ENCODE measurements at regions of chr4 and their contacts with region 1.

Region 1: DNA sequence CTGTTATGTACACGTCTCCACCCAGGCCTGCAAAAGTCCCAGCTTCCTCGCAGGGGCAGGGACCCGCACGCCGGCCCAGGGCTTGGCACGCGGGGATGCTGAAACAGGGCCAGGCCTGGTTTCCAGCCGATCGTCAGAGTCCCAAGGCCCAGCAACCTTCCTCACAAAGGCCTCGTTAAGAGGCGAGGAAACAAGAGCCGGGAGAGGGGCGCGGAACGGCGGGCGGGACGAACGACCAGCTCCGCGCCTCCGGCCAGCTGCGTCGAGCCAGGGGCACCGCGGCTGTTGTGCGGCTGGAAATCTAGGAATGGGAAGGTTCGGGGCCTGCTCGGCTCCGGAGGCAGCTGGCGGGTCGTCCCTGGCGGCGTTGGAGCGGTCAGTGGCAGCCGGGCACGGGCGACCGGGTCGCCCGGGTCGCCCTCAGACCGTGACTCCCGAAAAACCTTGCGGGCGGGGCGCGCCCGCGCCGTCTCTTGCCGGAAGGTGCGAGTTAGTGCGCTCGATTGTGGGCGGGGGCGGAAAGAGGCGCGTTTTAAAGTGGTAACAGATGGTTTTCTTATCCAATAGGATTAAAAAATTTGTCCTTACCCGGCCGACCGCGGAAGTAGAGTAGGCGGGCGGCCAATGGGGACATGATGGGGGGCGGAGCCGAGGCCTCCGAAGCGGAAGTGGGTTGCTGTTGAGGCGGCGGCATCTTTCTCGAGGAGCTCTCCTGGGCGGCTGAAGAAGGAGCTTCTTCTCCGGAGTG is at the start of gene RNF4:
- DNase-seq: peak; percentile 91
- ATAC-seq: peak; percentile 85
- H3K4me3 Mint-ChIP-seq: peak within 1 kb of the TSS; percentile 97
- H3K27ac Mint-ChIP-seq: peak within 1 kb of the TSS; percentile 98
- H3K4me1 Mint-ChIP-seq: peaks cover 33% of the 10 kb centered on the region
- H3K27me3 Mint-ChIP-seq: peaks cover 3% of the 10 kb centered on the region
- total RNA-seq, gene RNF4: 103 to 109 TPM

Region 2: GRCh38 chr4:2241410-2242353 is 226.9 kb before region 1 on chr4 and contains the starts of genes HAUS3 and POLN:
- POLR2A ChIA-PET with region 1: interaction called, 15 read pairs
- DNase-seq: peak; percentile 99
- ATAC-seq: peak; percentile 93
- H3K4me3 Mint-ChIP-seq: peak within 1 kb of the TSS; percentile 92
- H3K27ac Mint-ChIP-seq: peak within 1 kb of the TSS; percentile 89
- H3K4me1 Mint-ChIP-seq: peaks cover 50% of the 10 kb centered on the region
- H3K27me3 Mint-ChIP-seq: peaks cover 4% of the 10 kb centered on the region
- total RNA-seq, gene HAUS3: 28.5 to 28.7 TPM
- total RNA-seq, gene POLN: 2.4 to 3.2 TPM

Region 3: GRCh38 chr4:2262143-2262943 is 206.3 kb before region 1 on chr4:
- POLR2A ChIA-PET with region 1: interaction called, 10 read pairs
- DNase-seq: peak; percentile 97
- ATAC-seq: peak; percentile 94
- H3K4me3 Mint-ChIP-seq: peak overlapping the region; percentile 70
- H3K27ac Mint-ChIP-seq: peak overlapping the region; percentile 77
- H3K4me1 Mint-ChIP-seq: no peaks in the 10 kb centered on the region
- H3K27me3 Mint-ChIP-seq: no peaks in the 10 kb centered on the region

Region 4: DNA sequence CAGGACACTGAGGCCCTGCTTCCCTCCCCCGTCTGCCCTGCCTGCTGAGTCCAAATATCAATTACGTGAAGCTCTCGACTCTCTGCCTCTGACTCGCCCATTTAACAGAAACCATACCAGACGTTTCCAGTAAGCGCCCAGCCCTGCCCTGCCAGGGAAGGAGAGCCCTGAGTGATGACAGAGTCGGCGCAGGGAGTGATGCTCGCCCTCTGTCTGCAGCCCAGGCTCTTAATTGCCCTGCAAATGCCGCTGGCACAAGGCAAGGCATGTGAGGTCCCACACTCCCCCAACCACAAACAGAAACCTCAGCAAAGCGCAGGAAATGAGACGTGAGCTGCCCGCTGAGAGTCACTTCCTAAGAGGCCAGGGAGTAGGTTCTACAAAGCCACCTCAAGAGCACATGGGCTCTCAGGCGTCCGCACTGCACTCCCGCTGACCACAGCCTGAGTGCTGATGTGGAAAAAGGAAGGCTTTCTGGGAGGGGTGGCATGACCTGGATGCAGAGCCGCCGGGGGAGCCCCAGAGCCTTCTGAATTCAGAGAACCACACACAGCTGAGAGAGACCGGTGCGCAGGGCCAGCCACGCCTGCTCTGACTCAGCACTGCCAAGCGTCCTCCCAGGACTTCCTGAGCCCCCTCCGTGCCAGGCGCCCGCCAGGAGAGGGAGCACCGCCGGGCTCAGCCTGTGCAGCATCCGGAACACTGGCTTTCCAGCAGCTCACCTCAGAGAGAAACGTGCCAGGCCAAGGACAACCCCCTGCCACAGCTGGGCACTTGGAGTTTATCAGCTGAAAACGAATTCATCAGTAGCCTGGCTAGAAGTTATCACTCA is 55.5 kb before region 1 on chr4:
- POLR2A ChIA-PET with region 1: interaction called, 23 read pairs
- DNase-seq: peak; percentile 86
- ATAC-seq: peak; percentile 85
- H3K4me3 Mint-ChIP-seq: peak overlapping the region; percentile 58
- H3K27ac Mint-ChIP-seq: peak overlapping the region; percentile 90
- H3K4me1 Mint-ChIP-seq: peaks cover 34% of the 10 kb centered on the region
- H3K27me3 Mint-ChIP-seq: peaks cover 42% of the 10 kb centered on the region

Region 5: GRCh38 chr4:2484993-2485392 is 16.4 kb after region 1 on chr4:
- POLR2A ChIA-PET with region 1: interaction called, 20 read pairs
- DNase-seq: peak; percentile 67
- ATAC-seq: peak; percentile 96
- H3K4me3 Mint-ChIP-seq: peak overlapping the region; percentile 66
- H3K27ac Mint-ChIP-seq: peak overlapping the region; percentile 90
- H3K4me1 Mint-ChIP-seq: peaks cover 66% of the 10 kb centered on the region
- H3K27me3 Mint-ChIP-seq: no peaks in the 10 kb centered on the region

Region 6: DNA sequence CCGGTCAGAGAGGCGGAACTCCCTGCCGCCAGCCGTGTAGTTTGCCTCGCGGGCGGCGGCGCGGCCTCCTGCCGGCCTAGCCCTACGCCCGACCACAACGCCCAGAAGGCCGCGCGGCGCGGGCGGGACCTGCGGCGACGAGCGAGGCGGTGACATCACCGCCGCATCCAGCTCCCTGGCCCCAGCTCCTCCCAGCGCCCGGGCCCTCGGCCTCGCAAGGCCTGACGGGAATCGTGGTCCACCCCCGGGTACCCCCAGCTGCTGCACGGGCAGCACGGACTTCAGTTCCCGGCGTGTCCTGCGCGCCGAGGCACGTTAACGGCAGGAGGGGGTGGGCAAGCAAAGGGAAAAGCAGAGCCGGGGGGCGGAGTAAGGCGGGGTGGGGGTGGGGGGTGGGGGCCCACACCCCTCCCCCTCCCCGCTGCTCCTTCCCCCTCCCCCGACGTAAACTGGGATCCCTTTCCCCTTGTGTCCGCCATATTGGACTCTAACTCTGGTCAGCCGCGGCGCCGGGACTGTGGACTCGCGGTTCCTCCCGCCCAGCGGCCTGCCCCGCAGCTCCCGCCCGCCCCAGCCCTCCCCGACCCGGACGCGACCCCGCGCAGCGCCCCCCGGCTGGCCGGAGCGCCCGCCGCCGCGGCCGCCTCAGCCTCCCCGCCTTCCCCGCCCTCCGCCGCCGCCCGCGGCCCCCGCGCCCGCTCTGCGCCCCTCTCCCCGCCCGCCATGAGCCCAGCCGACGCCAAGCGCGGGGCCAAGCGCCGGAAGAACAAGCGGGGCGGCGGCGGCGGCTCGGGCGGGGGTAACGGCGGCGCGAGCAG is 67.8 kb after region 1 on chr4 and contains the start of gene FAM193A:
- POLR2A ChIA-PET with region 1: interaction called, 13 read pairs
- DNase-seq: peak; percentile 97
- ATAC-seq: peak; percentile 95
- H3K4me3 Mint-ChIP-seq: peak within 1 kb of the TSS; percentile 94
- H3K27ac Mint-ChIP-seq: peak within 1 kb of the TSS; percentile 94
- H3K4me1 Mint-ChIP-seq: peaks cover 18% of the 10 kb centered on the region
- H3K27me3 Mint-ChIP-seq: no peaks in the 10 kb centered on the region
- total RNA-seq, gene FAM193A: 37.0 to 37.7 TPM

Region 7: GRCh38 chr4:2721586-2721985 is 253.0 kb after region 1 on chr4:
- POLR2A ChIA-PET with region 1: no interaction called
- DNase-seq: peak; percentile 17
- ATAC-seq: no peak
- H3K4me3 Mint-ChIP-seq: no peak overlapping the region
- H3K27ac Mint-ChIP-seq: no peak overlapping the region
- H3K4me1 Mint-ChIP-seq: peaks cover 10% of the 10 kb centered on the region
- H3K27me3 Mint-ChIP-seq: no peaks in the 10 kb centered on the region

Measured in activated naive CD8-positive, alpha-beta T cell treated with anti-CD3 and anti-CD28 coated beads, Interleukin-2, amount 10 ng/mL, durations not matched to agents 7 days and 5 days (primary cell).